Mucosa of descending colon (tissue), 3 donors: ENCODE measurements at regions of chr7 and their contacts with region 1.

Region 1: DNA sequence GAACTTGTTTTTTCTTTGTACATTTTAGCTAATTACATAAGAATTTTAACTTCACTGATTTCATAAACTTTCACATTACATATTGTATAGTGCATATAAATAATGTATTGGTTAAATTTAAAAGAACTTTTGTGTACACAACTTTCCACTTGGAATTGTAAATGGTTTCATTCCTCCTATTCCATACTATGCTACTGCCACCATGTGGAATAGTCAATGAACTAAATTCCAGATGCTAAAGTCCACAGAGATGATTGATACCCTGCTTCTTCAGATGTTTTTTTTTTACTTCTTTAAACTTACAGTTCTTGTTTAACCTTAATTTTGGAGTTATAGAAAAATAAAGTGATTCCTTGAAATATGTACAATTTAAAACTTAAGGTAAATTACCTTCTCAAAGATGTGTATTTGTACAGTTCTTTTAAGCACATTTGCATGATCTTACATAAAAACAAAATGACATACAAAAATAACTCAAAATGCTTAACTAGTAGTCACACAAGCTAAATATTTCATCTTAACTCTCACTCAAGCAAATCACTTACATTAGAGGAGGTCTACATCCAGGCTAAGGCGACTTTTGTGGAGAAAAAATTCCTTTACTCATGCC is 247.6 kb upstream of the HGF start:
- DNase-seq: no peak
- ATAC-seq: no peak
- H3K4me3 ChIP-seq: no peak overlapping the region
- H3K4me1 ChIP-seq: no peaks in the 10 kb centered on the region
- CTCF ChIP-seq: peak; percentile 11

Region 2: DNA sequence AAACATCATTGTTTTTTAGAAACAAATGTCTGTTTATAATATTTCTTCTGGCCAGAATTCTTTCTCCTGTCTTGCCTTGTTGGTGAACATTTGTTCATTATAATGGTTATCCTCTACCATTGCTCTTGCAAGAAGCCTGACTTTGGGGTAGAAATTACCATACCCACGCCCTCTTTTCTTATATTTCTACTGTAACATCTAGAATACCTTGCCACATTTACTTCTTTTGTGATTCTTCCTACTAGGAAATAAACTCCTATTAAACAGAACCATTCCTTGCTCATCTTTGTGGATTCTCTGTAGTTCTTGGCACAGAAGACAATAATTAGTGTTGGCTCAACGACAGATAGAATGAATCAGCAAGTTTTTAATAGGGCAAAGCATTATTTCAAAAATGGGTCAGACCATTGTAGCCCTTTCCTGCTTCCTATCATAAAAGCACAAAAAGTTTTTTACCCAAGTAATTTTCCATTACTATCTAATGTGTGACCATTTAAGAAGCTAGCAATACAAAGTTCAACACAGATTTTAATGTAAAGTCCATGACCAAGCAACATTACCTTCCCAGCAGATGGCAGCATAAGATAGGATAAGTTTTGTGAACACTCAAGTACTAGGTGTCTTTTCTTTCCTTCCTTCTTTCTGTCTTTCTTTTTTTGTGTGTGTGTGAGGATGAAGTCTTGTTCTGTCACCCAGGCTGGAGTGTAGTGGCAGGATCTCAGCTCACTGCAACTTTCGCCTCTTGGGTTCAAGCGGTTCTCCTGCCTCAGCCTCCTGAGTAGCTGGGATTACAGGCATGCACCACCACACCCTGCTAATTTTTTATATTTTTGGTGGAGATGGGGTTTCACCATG is 518.0 kb before region 1 on chr7:
- intact Hi-C with region 1: loop called in 1 of 2 experiments (anchors 10 kb)
- DNase-seq: peak in 1 of 3 donors; percentile 57
- ATAC-seq: peak; percentile 55
- H3K4me3 ChIP-seq: no peak overlapping the region
- H3K4me1 ChIP-seq: no peaks in the 10 kb centered on the region
- CTCF ChIP-seq: peak; percentile 33

Region 3: DNA sequence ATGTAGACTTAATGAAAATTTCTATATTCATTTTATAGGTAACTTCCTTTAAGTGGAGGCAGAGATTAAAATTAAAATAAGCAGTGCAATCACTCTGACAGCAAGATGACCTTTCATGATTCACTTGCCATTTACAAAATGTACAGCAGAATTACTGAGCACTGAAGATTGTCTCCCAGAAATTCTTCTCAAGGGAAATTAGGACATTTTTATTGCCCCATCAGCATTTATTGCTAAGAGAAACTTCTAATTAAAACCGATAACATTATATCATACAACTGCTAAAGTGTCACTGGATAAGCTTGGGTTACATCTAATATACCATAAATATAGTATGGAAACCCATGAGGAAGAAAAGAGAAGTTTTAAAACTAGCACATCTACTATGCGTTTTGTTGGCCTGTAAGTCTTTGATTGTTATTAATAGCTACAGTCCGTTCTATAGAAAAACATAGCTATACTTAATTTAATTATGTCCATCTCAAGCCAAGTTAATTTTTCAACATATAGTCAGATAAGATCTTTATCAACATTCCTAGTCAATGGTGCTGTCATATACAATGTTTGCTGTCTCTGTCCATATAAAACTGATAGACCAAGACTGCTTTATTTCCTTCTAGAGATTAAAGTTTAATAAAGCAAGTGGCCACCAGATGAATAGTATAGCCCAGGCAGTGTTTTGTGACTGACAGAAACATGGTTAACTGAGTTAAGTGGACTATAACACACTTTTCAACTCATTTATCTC is 30.5 kb before region 1 on chr7:
- intact Hi-C with region 1: no loop called
- DNase-seq: no peak
- ATAC-seq: no peak
- H3K4me3 ChIP-seq: no peak overlapping the region
- H3K4me1 ChIP-seq: no peaks in the 10 kb centered on the region
- CTCF ChIP-seq: no peak